Endothelial cell of umbilical vein (primary cell): ENCODE measurements at regions of chr2 and their contacts with region 1.

Region 1: GRCh38 chr2:68467077-68467960 is at the starts of genes APLF and FBXO48:
- DNase-seq: peak; percentile 99
- H3K4me3 ChIP-seq: peak within 1 kb of the TSS; percentile 80 to 94 (median 85)
- H3K27ac ChIP-seq: peak within 1 kb of the TSS; percentile 74
- H3K4me1 ChIP-seq: peaks cover 7% of the 10 kb centered on the region
- H3K27me3 ChIP-seq: no peaks in the 10 kb centered on the region
- CTCF ChIP-seq: no peak
- POLR2A ChIP-seq: peak; percentile 68
- total RNA-seq, gene APLF: 2.3 and 2.4 TPM in 2 replicates
- total RNA-seq, gene FBXO48: 0.73 and 0.83 TPM in 2 replicates

Region 2: GRCh38 chr2:68157402-68158133 is 309.8 kb before region 1 on chr2 and contains the start of gene PNO1:
- CTCF ChIA-PET with region 1: no interaction called
- POLR2A ChIA-PET with region 1: no interaction called
- dilution Hi-C with region 1: no loop called
- intact Hi-C with region 1: loop called (anchors 1 kb)
- DNase-seq: peak; percentile 96
- H3K4me3 ChIP-seq: peak within 1 kb of the TSS; percentile 66 to 99 (median 89)
- H3K27ac ChIP-seq: peak within 1 kb of the TSS; percentile 83
- H3K4me1 ChIP-seq: peaks cover 21% of the 10 kb centered on the region
- H3K27me3 ChIP-seq: no peaks in the 10 kb centered on the region
- CTCF ChIP-seq: peak in 1 of 2 donors; percentile 8
- POLR2A ChIP-seq: peak; percentile 47
- total RNA-seq, gene PNO1: 19.9 and 25.6 TPM in 2 replicates

Region 3: GRCh38 chr2:68272246-68272994 is 194.9 kb before region 1 on chr2:
- CTCF ChIA-PET with region 1: no interaction called
- POLR2A ChIA-PET with region 1: no interaction called
- dilution Hi-C with region 1: no loop called
- intact Hi-C with region 1: no loop called
- DNase-seq: no peak
- H3K4me3 ChIP-seq: no peak overlapping the region
- H3K27ac ChIP-seq: no peak overlapping the region
- H3K4me1 ChIP-seq: no peaks in the 10 kb centered on the region
- H3K27me3 ChIP-seq: no peaks in the 10 kb centered on the region
- CTCF ChIP-seq: no peak
- POLR2A ChIP-seq: no peak

Region 4: GRCh38 chr2:68432696-68433658 is 34.3 kb before region 1 on chr2:
- CTCF ChIA-PET with region 1: no interaction called
- POLR2A ChIA-PET with region 1: no interaction called
- dilution Hi-C with region 1: no loop called
- intact Hi-C with region 1: no loop called
- DNase-seq: no peak
- H3K4me3 ChIP-seq: no peak overlapping the region
- H3K27ac ChIP-seq: no peak overlapping the region
- H3K4me1 ChIP-seq: no peaks in the 10 kb centered on the region
- H3K27me3 ChIP-seq: peaks cover 9 to 12% of the 10 kb centered on the region in 2 experiments
- CTCF ChIP-seq: no peak
- POLR2A ChIP-seq: no peak

Region 5: DNA sequence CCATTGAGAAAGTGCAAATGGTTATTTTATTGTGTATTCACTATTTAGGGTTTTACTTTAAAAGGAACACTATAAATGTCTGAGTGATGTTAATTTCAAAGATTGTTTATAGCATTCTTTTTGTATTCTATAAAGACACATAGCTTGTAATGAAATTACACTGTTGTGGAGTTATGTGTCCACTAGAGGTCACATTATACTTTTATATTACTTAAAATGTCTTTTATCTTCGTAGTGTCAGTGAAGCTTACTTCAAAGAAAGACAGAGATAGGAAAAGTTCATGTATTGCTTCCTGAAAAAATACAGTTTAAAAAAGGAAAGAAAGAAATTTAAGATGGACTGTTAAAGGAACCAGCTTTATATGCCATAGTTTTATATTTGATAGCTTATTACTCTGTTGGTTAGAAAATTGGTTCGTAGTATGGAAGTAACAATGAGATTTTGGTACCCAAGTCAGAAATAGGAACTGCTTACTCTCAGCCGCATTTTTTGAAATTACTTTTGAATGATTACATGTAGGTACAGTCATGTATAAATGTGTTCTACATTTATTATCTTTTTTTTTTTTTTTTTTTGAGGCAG is 20.5 kb after region 1 on chr2:
- CTCF ChIA-PET with region 1: interaction called, 50 read pairs
- POLR2A ChIA-PET with region 1: interaction called, 4 read pairs
- dilution Hi-C with region 1: no loop called
- intact Hi-C with region 1: no loop called
- DNase-seq: peak; percentile 44
- H3K4me3 ChIP-seq: no peak overlapping the region
- H3K27ac ChIP-seq: no peak overlapping the region
- H3K4me1 ChIP-seq: peaks cover 2% of the 10 kb centered on the region
- H3K27me3 ChIP-seq: no peaks in the 10 kb centered on the region
- CTCF ChIP-seq: peak; percentile 11 to 21
- POLR2A ChIP-seq: no peak

Region 6: GRCh38 chr2:68653538-68653982 is 186.2 kb after region 1 on chr2:
- CTCF ChIA-PET with region 1: interaction called, 6 read pairs
- POLR2A ChIA-PET with region 1: no interaction called
- dilution Hi-C with region 1: no loop called
- intact Hi-C with region 1: loop called (anchors 5 kb)
- DNase-seq: peak; percentile 86
- H3K4me3 ChIP-seq: peak overlapping the region in 1 of 3 experiments; percentile 2
- H3K27ac ChIP-seq: no peak overlapping the region
- H3K4me1 ChIP-seq: peaks cover 17% of the 10 kb centered on the region
- H3K27me3 ChIP-seq: peaks cover 31 to 35% of the 10 kb centered on the region in 2 experiments
- CTCF ChIP-seq: no peak
- POLR2A ChIP-seq: no peak

Region 7: GRCh38 chr2:68721482-68722101 is 254.3 kb after region 1 on chr2:
- CTCF ChIA-PET with region 1: interaction called, 305 read pairs
- POLR2A ChIA-PET with region 1: no interaction called
- dilution Hi-C with region 1: no loop called
- intact Hi-C with region 1: no loop called
- DNase-seq: no peak
- H3K4me3 ChIP-seq: no peak overlapping the region
- H3K27ac ChIP-seq: no peak overlapping the region
- H3K4me1 ChIP-seq: no peaks in the 10 kb centered on the region
- H3K27me3 ChIP-seq: peaks cover 8 to 17% of the 10 kb centered on the region in 2 experiments
- CTCF ChIP-seq: no peak
- POLR2A ChIP-seq: no peak

Region 8: DNA sequence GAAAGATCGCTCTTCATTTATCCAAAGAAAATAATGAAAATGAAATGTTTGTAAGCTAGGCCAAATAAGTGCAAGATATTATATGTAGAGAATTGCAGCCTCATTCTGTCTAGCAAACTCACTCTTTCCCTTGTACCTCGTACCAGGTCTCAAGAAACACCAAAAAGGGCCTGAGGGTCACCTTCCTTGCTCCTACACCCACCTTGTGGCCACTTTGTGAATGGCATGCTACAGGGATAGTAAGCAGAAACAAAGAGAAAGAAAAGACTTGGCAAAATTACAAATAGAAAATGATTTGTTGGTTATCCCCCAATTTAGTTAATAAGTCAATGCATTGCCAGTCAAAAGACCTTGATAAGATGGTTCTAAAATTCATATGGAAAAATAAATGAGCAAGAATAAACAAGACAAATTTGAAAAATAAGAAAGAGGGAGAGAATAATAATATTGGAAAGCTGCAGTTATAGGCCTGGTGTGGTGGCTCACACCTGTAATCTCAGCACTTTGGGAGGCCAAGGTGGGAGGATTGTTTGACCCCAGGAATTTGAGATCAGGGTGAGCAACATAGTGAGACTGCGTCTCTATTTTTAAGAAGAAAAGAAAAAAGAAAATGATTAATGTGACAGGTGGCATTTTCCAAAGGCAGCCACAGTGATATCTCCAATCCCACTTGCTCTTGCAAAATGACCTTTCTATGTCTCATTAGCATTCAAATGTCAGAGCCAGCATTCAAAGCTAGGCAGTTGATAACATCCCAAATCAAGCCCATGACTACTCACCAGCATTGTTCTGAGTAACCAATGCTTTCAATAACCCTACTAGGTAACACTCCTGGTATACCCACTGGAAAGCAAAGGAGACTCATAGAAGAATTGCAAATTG is 442.7 kb after region 1 on chr2:
- CTCF ChIA-PET with region 1: interaction called, 8 read pairs
- POLR2A ChIA-PET with region 1: no interaction called
- dilution Hi-C with region 1: no loop called
- intact Hi-C with region 1: loop called (anchors 5 kb)
- DNase-seq: peak; percentile 82
- H3K4me3 ChIP-seq: no peak overlapping the region
- H3K27ac ChIP-seq: no peak overlapping the region
- H3K4me1 ChIP-seq: peaks cover 32% of the 10 kb centered on the region
- H3K27me3 ChIP-seq: peaks cover 4 to 12% of the 10 kb centered on the region in 2 experiments
- CTCF ChIP-seq: peak; percentile 77 to 86
- POLR2A ChIP-seq: no peak

Region 9: DNA sequence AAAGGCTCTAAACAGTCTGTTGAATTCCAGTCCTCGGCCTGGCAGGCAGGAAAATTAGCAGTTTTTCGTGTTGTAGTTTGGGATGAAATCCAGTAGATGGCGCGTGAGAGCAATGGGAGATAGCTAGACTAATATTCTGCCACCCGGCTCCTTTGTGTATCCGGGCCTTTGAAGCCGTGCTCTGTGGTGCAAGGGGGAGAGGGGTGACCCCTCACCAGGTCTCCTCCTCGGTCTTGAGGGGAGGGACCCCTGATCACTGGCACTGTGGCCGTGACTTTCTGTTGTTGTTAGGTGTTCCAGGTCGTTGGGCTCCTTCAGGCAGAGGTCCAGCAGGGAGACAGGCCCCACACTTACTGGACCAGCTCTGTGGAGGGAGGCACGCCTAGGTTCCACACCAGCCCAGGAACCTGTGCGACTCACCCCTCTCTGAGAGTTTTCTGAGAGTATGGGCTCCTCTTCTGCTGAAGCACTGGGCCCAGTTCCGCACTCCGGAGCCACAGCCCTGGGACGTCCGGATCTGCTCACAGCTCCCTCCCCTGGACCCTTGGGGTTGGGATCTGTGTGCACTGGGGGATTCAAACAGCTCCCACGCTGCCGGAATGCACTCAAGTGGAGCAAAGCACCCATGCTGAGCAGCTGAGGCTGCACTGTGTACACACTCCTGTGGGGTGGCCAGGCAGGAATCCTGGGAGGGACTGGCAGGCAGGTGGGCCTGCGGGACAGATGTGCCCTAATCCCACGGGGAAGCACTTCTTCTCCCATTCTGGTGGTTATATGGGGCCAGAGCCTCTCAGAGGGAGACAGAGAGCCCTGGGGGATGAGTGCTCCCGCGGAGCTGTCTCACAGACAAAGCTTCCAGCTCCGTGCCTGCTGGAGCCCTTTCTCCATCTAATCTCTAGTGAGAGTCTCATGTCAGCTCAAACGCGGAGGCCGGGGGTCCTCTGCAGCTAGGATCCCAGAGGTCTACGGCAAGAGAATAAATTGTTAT is 476.6 kb after region 1 on chr2:
- CTCF ChIA-PET with region 1: interaction called, 10 read pairs
- POLR2A ChIA-PET with region 1: no interaction called
- dilution Hi-C with region 1: no loop called
- intact Hi-C with region 1: no loop called
- DNase-seq: peak; percentile 64
- H3K4me3 ChIP-seq: no peak overlapping the region
- H3K27ac ChIP-seq: no peak overlapping the region
- H3K4me1 ChIP-seq: no peaks in the 10 kb centered on the region
- H3K27me3 ChIP-seq: peaks cover 6 to 29% of the 10 kb centered on the region in 2 experiments
- CTCF ChIP-seq: peak; percentile 70 to 71
- POLR2A ChIP-seq: no peak